Activated CD4-positive, alpha-beta T cell treated with anti-CD3 and anti-CD28 coated beads, Interleukin-2, amount 10 ng/mL, durations not matched to agents 24 days and 14 days (primary cell): ENCODE measurements at regions of chrX and their contacts with region 1.

Region 1: GRCh38 chrX:20594985-20595384 is 328.3 kb upstream of the RPS6KA3 start:
- DNase-seq: no peak
- H3K4me3 Mint-ChIP-seq: no peak overlapping the region
- H3K27ac Mint-ChIP-seq: no peak overlapping the region
- H3K4me1 Mint-ChIP-seq: peaks cover 14% of the 10 kb centered on the region
- H3K27me3 Mint-ChIP-seq: no peaks in the 10 kb centered on the region

Region 2: DNA sequence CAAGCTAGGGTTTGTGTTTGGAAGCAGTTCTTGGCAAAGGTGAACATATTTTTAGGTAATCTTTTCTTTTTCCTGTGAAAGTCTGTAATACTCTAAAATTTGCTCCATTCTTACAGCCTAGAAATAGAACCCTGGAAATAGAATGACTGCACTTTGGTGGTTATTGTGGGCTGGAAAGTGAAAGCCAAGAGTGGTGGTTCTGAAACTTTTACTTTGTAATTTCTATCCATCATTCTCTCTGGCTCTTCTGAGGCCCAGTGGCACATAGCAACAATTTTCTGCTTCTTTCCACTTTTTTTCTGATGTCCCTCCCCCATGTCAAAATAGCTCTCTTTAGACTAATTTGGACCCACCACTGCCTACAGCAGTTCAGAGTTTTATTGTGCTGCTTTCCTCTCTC is 27.9 kb before region 1 on chrX:
- intact Hi-C with region 1: loop called (anchors 2 kb)
- DNase-seq: no peak
- H3K4me3 Mint-ChIP-seq: no peak overlapping the region
- H3K27ac Mint-ChIP-seq: no peak overlapping the region
- H3K4me1 Mint-ChIP-seq: peaks cover 5% of the 10 kb centered on the region
- H3K27me3 Mint-ChIP-seq: peaks cover 8% of the 10 kb centered on the region

Region 3: DNA sequence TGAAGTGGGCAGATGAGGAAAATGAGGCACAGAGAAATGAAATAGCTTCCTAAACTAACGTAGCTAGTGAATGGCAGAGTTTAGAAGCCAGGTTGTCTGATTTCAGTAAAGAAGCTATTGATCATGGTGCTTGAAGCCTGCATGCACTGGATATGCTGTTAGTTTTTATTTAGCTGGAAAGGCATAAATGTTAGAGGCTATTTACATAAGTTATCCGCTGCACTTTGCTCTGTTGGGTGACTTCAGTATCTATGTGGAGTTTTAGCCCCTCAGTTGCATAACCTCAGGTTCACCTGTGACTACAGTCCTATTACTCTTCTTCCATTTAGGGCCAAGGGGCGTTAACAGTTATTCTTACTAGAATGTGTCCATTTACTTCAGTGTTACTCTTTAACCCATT is 194.1 kb after region 1 on chrX:
- intact Hi-C with region 1: no loop called
- DNase-seq: no peak
- H3K4me3 Mint-ChIP-seq: no peak overlapping the region
- H3K27ac Mint-ChIP-seq: no peak overlapping the region
- H3K4me1 Mint-ChIP-seq: no peaks in the 10 kb centered on the region
- H3K27me3 Mint-ChIP-seq: no peaks in the 10 kb centered on the region

Region 4: GRCh38 chrX:20802041-20802440 is 207.1 kb after region 1 on chrX:
- intact Hi-C with region 1: no loop called
- DNase-seq: no peak
- H3K4me3 Mint-ChIP-seq: no peak overlapping the region
- H3K27ac Mint-ChIP-seq: no peak overlapping the region
- H3K4me1 Mint-ChIP-seq: no peaks in the 10 kb centered on the region
- H3K27me3 Mint-ChIP-seq: no peaks in the 10 kb centered on the region